Endothelial cell of umbilical vein (primary cell): ENCODE measurements at regions of chr9 and their contacts with region 1.

Region 1: GRCh38 chr9:134099123-134099787 is 31.4 kb upstream of the BRD3 start:
- DNase-seq: peak; percentile 39
- H3K4me3 ChIP-seq: no peak overlapping the region
- H3K27ac ChIP-seq: no peak overlapping the region
- H3K4me1 ChIP-seq: no peaks in the 10 kb centered on the region
- H3K27me3 ChIP-seq: peaks cover 0 to 3% of the 10 kb centered on the region in 2 experiments
- CTCF ChIP-seq: peak; percentile 63 to 75
- POLR2A ChIP-seq: no peak

Region 2: GRCh38 chr9:133839822-133840329 is 259.4 kb before region 1 on chr9:
- CTCF ChIA-PET with region 1: no interaction called
- POLR2A ChIA-PET with region 1: no interaction called
- dilution Hi-C with region 1: no loop called
- intact Hi-C with region 1: no loop called
- DNase-seq: peak; percentile 13
- H3K4me3 ChIP-seq: no peak overlapping the region
- H3K27ac ChIP-seq: no peak overlapping the region
- H3K4me1 ChIP-seq: peaks cover 11% of the 10 kb centered on the region
- H3K27me3 ChIP-seq: no peaks in the 10 kb centered on the region
- CTCF ChIP-seq: no peak
- POLR2A ChIP-seq: no peak

Region 3: GRCh38 chr9:134065601-134066419 is 33.4 kb before region 1 on chr9:
- CTCF ChIA-PET with region 1: no interaction called
- POLR2A ChIA-PET with region 1: no interaction called
- dilution Hi-C with region 1: no loop called
- intact Hi-C with region 1: no loop called
- DNase-seq: peak; percentile 62
- H3K4me3 ChIP-seq: peak overlapping the region; percentile 73 to 92 (median 78)
- H3K27ac ChIP-seq: no peak overlapping the region
- H3K4me1 ChIP-seq: peaks cover 12% of the 10 kb centered on the region
- H3K27me3 ChIP-seq: peaks cover 14 to 15% of the 10 kb centered on the region in 2 experiments
- CTCF ChIP-seq: no peak
- POLR2A ChIP-seq: no peak

Region 4: GRCh38 chr9:134076644-134077043 is 22.6 kb before region 1 on chr9:
- CTCF ChIA-PET with region 1: interaction called, 8 read pairs
- POLR2A ChIA-PET with region 1: no interaction called
- dilution Hi-C with region 1: no loop called
- intact Hi-C with region 1: loop called (anchors 1 kb)
- DNase-seq: no peak
- H3K4me3 ChIP-seq: no peak overlapping the region
- H3K27ac ChIP-seq: no peak overlapping the region
- H3K4me1 ChIP-seq: no peaks in the 10 kb centered on the region
- H3K27me3 ChIP-seq: peaks cover 4 to 13% of the 10 kb centered on the region in 2 experiments
- CTCF ChIP-seq: no peak
- POLR2A ChIP-seq: no peak